HCT116 (cell line): ENCODE measurements at regions of chr9 and their contacts with region 1.

Region 1: DNA sequence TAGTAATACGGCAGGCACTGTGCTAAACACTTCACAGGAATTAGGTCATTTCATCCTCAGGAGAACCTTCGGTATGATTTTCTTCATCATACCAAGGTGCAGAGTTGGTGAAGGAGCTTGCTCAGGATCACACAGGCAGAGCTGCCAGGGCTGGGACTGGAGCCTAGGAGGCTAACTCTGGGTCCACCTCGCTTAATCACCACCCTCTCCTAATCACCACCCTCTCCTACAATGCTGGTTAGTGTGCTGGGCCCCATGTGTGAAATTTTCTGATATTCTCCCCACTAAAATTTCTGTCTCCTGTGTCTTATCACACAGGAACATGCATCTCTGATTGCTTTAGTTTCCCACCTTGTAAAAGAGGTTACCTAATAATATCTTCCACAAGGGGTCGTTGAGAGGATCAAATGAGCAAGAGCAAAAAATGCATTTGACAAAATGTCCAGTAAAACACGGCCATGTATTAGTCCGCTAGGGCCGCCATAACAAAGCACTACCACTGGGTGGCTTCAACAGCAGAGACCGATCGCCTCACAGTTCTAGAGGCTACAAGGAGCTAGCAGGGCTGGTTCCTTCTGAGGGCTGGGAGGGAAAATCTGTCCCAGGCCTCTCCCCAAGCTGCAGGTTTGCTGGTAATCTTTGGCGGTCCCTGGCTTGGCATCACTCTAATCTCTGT is 128.2 kb upstream of the NFIB start:
- DNase-seq: peak; percentile 72
- ATAC-seq: peak; percentile 100
- H3K4me3 ChIP-seq: no peak overlapping the region
- H3K27ac ChIP-seq: no peak overlapping the region
- H3K4me1 ChIP-seq: no peaks in the 10 kb centered on the region
- H3K27me3 ChIP-seq: no peaks in the 10 kb centered on the region
- CTCF ChIP-seq: peak; percentile 60 to 77 (median 71); a peak in 5 of 6 replicates
- POLR2A ChIP-seq: no peak
- RAD21 ChIP-seq: peak; percentile 40

Region 2: GRCh38 chr9:14661421-14662059 is 219.4 kb after region 1 on chr9:
- CTCF ChIA-PET with region 1: interaction called, 7 read pairs
- POLR2A ChIA-PET with region 1: no interaction called
- RAD21 ChIA-PET with region 1: interaction called in 1 of 2 experiments, 3 read pairs
- intact Hi-C with region 1: loop called (anchors 2 kb)
- DNase-seq: no peak
- ATAC-seq: peak; percentile 55
- H3K4me3 ChIP-seq: no peak overlapping the region
- H3K27ac ChIP-seq: no peak overlapping the region
- H3K4me1 ChIP-seq: no peaks in the 10 kb centered on the region
- H3K27me3 ChIP-seq: no peaks in the 10 kb centered on the region
- CTCF ChIP-seq: peak; percentile 18 to 70 (median 52); a peak in 5 of 6 replicates
- POLR2A ChIP-seq: no peak
- RAD21 ChIP-seq: peak; percentile 35; the same call in 1 of the 2 replicates

Region 3: DNA sequence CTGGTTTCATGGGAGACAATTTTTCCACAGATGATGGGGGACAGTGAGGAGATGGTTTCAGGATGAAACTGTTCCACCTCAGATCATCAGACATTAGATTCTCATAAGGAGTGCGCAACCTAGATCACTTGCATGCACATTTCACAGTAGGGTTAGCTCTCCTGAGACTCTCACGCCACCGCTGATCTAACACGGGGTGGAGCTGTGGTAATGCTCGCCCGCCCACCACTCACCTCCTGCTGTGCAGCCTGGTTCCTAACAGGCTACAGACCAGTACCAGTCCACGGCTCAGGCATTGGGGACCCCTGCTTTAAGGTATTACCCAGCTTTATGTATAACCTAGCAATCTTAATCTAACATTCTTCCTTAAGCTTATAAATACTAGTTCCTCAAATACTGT is 829.3 kb after region 1 on chr9:
- CTCF ChIA-PET with region 1: no interaction called
- POLR2A ChIA-PET with region 1: no interaction called
- RAD21 ChIA-PET with region 1: no interaction called
- intact Hi-C with region 1: no loop called
- DNase-seq: no peak
- ATAC-seq: no peak
- H3K4me3 ChIP-seq: no peak overlapping the region
- H3K27ac ChIP-seq: no peak overlapping the region
- H3K4me1 ChIP-seq: peaks cover 0 to 3% of the 10 kb centered on the region in 2 experiments; a peak in 2 of 4 replicates
- H3K27me3 ChIP-seq: no peaks in the 10 kb centered on the region
- CTCF ChIP-seq: no peak
- POLR2A ChIP-seq: no peak
- RAD21 ChIP-seq: no peak